WTC11 (cell line): ENCODE measurements at regions of chr3 and their contacts with region 1.

Region 1: DNA sequence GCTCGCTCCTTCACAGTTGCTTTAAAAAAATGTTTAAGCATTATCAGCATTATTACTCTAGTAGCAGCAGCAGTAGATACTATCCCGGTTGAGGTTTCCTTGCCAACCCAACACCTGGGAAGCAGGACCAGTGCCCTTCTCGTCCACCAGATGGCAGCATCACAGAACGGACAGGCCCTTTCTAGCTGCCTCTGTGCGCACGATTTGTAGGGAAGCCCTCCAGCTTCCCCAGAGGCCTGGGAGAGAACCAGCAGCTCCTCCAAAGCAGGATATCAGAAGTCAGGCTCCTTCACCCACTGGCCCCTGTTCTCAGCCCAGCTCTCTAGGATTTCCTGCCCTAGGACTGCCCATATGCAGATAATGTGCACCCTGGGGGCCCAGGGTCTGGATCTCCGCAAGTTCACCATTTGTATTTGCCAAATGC is 16.8 kb upstream of the ESYT3 start:
- DNase-seq: peak; percentile 88
- ATAC-seq: peak; percentile 97
- H3K4me3 Mint-ChIP-seq: no peak overlapping the region
- H3K27ac Mint-ChIP-seq: no peak overlapping the region
- H3K4me1 Mint-ChIP-seq: peaks cover 15% of the 10 kb centered on the region
- H3K27me3 Mint-ChIP-seq: peaks cover 27% of the 10 kb centered on the region
- CTCF ChIP-seq: peak; percentile 91

Region 2: DNA sequence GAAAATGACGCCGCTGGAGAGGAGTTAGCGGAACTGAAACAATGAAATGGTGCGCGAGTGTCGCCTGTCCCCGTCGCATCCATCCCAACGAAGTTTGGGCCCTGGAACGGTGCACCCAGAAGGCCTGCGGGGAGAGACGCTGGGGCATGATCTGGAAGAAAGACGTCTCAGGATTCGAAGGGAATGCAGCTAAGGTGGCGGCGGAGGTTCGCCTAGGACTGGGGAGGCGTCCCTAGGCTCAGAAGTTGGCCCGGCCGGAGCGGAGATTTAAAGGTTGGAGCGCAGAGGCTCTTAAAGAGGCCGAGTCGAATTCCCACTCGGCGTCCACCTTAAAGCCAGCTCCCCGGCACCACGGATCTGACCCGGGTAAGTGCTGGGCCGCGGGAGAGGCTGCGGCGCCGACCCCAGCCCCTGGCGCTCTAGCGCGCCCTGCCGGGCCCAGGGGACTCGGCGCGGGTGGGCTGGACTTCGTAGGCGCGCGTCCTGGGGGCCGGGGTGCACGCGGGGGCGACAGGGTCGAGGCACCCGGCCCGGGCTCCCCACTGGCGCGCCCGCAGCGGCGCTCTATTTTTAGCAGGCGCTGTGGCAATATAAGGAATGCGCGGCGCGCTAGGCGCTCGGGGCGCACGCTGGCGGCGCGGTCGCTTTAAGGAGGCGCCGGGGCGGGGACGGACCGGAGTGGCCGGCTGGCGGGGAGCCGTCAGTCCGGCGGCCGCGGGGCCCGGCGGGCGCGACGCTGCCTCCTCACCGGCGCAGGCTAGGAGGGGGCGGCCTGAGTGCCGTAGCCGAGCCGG is 69.4 kb before region 1 on chr3 and contains the start of gene MRAS:
- CTCF ChIA-PET with region 1: interaction called, 19 read pairs
- POLR2A ChIA-PET with region 1: no interaction called
- DNase-seq: peak; percentile 79
- ATAC-seq: peak; percentile 76
- H3K4me3 Mint-ChIP-seq: peak within 1 kb of the TSS; percentile 93
- H3K27ac Mint-ChIP-seq: peak within 1 kb of the TSS; percentile 90
- H3K4me1 Mint-ChIP-seq: peaks cover 17% of the 10 kb centered on the region
- H3K27me3 Mint-ChIP-seq: peaks cover 15% of the 10 kb centered on the region
- CTCF ChIP-seq: no peak
- total RNA-seq, gene MRAS: 11.1 to 14.8 TPM (median 11.7 TPM) in 3 replicates

Region 3: DNA sequence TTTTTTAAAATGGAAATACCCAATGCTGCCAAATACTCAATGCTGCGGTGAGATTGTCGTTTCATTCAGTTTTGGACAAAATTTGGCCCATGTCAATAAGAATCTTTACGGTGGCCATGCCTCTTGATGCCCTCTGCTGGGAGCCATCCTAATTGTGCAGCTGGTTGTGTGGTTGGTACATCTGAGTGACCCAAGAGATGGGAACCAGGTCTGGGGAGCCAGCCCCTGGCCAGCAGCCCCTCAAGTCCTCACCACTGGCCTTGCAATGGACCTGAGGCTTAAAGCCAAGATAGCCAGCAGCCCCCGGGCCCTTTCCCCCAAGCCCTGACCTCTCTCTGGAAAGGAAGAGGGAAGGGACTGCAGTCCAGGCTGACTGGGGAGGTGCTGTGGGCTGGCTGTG is 19.6 kb before region 1 on chr3:
- CTCF ChIA-PET with region 1: interaction called, 33 read pairs
- POLR2A ChIA-PET with region 1: no interaction called
- DNase-seq: no peak
- ATAC-seq: no peak
- H3K4me3 Mint-ChIP-seq: no peak overlapping the region
- H3K27ac Mint-ChIP-seq: no peak overlapping the region
- H3K4me1 Mint-ChIP-seq: peaks cover 32% of the 10 kb centered on the region
- H3K27me3 Mint-ChIP-seq: no peaks in the 10 kb centered on the region
- CTCF ChIP-seq: no peak

Region 4: GRCh38 chr3:138442433-138442832 is 24.9 kb after region 1 on chr3:
- CTCF ChIA-PET with region 1: interaction called, 17 read pairs
- POLR2A ChIA-PET with region 1: no interaction called
- DNase-seq: no peak
- ATAC-seq: peak; percentile 44
- H3K4me3 Mint-ChIP-seq: no peak overlapping the region
- H3K27ac Mint-ChIP-seq: no peak overlapping the region
- H3K4me1 Mint-ChIP-seq: peaks cover 6% of the 10 kb centered on the region
- H3K27me3 Mint-ChIP-seq: peaks cover 4% of the 10 kb centered on the region
- CTCF ChIP-seq: no peak

Region 5: GRCh38 chr3:138479438-138479863 is 61.9 kb after region 1 on chr3:
- CTCF ChIA-PET with region 1: interaction called, 19 read pairs
- POLR2A ChIA-PET with region 1: no interaction called
- DNase-seq: peak; percentile 71
- ATAC-seq: peak; percentile 91
- H3K4me3 Mint-ChIP-seq: no peak overlapping the region
- H3K27ac Mint-ChIP-seq: no peak overlapping the region
- H3K4me1 Mint-ChIP-seq: peaks cover 4% of the 10 kb centered on the region
- H3K27me3 Mint-ChIP-seq: no peaks in the 10 kb centered on the region; the same call in 1 of the 2 replicates
- CTCF ChIP-seq: peak; percentile 57

Region 6: GRCh38 chr3:138539352-138539751 is 121.8 kb after region 1 on chr3:
- CTCF ChIA-PET with region 1: no interaction called
- POLR2A ChIA-PET with region 1: no interaction called
- DNase-seq: no peak
- ATAC-seq: no peak
- H3K4me3 Mint-ChIP-seq: no peak overlapping the region
- H3K27ac Mint-ChIP-seq: no peak overlapping the region
- H3K4me1 Mint-ChIP-seq: no peaks in the 10 kb centered on the region
- H3K27me3 Mint-ChIP-seq: no peaks in the 10 kb centered on the region
- CTCF ChIP-seq: no peak

Region 7: DNA sequence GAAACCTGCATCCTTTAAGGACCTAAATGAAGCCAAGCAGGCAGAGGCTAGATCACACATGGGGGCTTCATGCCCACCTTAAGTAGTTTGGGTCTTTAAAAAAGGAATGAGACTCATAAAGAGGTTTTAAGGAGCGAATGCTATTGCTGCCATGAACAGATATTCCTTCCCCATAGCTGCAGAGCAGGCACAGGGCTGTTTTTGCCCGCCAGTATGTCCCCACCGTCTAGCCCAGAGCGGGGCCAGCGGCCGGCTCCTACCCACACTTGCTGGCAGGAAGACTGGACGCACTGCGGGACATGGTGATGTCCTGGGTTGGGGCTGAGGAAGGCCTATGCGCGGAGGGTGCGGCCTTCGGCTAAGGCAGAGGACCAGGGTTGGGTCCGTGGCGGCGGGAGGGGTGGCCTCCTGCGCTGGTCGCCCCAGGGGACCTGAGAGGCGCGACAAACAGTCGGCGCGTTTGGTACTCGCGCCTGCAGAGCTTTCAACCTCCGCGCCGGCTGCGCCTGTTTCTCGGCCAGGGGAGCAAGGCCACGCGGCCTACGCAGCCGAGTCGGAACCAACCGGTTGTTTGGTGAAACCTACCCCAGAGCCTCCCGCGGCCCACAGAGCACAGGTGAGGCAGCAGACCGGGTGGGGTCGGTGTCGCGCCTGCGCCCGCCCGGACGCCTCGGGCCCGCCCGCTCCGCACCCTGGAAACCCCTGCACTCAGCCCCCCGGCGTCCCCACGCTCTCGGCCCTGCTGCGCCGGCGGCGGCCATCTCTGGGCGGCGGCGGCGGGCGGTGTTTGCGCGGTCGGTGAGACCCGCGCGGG is 191.0 kb after region 1 on chr3 and contains the start of gene FAIM:
- CTCF ChIA-PET with region 1: no interaction called
- POLR2A ChIA-PET with region 1: no interaction called
- DNase-seq: peak; percentile 70
- ATAC-seq: peak; percentile 76
- H3K4me3 Mint-ChIP-seq: peak within 1 kb of the TSS; percentile 69
- H3K27ac Mint-ChIP-seq: no peak within 1 kb of the TSS; the same call in 1 of the 2 replicates
- H3K4me1 Mint-ChIP-seq: peaks cover 23% of the 10 kb centered on the region
- H3K27me3 Mint-ChIP-seq: peaks cover 17% of the 10 kb centered on the region
- CTCF ChIP-seq: no peak
- total RNA-seq, gene FAIM: 4.8 to 6.4 TPM (median 5.4 TPM) in 3 replicates